Spleen (tissue), 13 donors: ENCODE measurements at regions of chr11 and their contacts with region 1.

Region 1: DNA sequence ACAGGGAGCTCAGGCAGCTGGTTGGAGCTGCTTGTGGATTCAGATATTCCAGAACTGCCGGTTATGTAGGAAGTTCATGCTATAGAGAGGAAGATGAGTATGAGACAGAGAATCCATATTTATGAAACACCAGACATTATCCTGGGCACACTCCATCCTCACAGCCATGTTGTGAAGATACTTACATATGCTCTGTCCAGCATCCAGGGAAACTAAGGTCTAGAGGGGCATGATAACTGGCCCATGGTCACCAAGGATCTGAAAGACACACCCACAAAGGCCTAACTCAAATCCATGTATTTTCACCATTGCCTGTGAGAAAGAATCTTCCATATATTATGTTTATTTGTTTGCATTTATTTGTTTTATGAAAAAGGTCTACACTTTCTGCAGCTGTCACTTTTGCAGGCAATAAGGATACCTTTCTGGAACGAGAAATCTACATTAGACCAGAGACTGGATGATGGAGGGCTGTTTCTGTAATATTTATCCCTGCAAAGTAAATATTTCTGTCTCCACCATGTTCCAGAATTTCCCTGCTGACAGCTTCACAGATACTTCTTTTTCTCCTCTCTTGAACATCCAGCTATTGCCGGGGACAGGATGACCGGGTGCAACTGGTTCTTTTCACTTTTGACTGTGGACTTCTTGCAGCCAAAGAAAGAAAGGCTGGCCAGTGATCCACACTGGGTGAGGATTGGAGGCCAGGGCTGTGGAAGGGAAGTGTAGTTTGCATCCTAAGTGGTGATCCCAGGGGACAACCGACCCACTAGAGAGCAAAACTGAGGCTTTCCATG is 145.9 kb upstream of the NAV2 start:
- DNase-seq: no peak
- H3K4me3 ChIP-seq: no peak overlapping the region
- H3K27ac ChIP-seq: no peak overlapping the region
- H3K4me1 ChIP-seq: peaks cover 0 to 7% (median 5%) of the 10 kb centered on the region in 6 donors
- H3K27me3 ChIP-seq: peaks cover 0 to 15% (median 0%) of the 10 kb centered on the region in 7 donors
- CTCF ChIP-seq: no peak
- POLR2A ChIP-seq: no peak

Region 2: GRCh38 chr11:19519912-19520641 is 46.7 kb before region 1 on chr11:
- intact Hi-C with region 1: no loop called
- DNase-seq: no peak
- H3K4me3 ChIP-seq: no peak overlapping the region
- H3K27ac ChIP-seq: no peak overlapping the region
- H3K4me1 ChIP-seq: no peaks in the 10 kb centered on the region
- H3K27me3 ChIP-seq: peaks cover 0 to 6% (median 0%) of the 10 kb centered on the region in 7 donors
- CTCF ChIP-seq: no peak
- POLR2A ChIP-seq: no peak

Region 3: DNA sequence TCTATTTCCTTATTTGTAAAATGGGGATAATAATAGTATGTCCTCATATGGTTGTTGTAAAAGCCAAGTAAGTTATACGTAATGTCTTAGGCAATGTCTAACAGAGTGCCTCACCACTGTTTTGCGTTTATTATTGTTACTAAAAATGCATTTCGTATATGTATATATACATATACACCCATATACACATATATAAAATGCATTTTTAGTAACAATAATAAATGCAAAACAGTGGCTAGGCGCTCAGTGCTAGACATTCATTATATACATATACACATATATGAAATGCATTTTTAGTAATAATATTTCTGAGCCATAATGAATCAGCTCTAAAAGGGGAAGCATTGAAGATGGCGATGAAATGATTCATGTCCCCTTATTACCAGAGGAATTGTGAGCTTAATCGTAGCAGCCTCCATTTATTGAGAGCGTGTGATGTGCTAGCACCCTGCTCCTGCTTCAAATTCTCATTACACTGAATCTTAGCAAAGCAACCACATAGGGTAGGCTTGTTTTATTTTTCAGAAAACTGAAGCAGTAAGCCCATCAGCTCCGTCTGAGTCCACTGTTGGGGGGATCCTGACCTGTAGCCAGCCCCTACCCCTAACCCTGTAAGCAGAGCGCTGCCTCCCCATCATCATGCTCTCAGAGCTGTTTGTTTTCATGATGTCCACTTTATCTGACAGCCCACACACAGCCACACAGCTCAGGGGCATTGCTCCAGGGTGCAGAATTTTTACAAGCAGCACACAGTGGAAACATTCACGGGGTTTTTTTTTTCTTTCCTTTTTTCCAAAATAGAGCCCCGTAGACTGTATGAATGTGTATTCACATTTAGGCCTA is 48.8 kb after region 1 on chr11:
- intact Hi-C with region 1: no loop called
- DNase-seq: no peak
- H3K4me3 ChIP-seq: no peak overlapping the region
- H3K27ac ChIP-seq: no peak overlapping the region
- H3K4me1 ChIP-seq: no peaks in the 10 kb centered on the region
- H3K27me3 ChIP-seq: no peaks in the 10 kb centered on the region
- CTCF ChIP-seq: no peak
- POLR2A ChIP-seq: no peak

Region 4: GRCh38 chr11:19739872-19740271 is 173.1 kb after region 1 on chr11:
- intact Hi-C with region 1: loop called (anchors 2 kb)
- DNase-seq: no peak
- H3K4me3 ChIP-seq: no peak overlapping the region
- H3K27ac ChIP-seq: no peak overlapping the region
- H3K4me1 ChIP-seq: peaks cover 0 to 11% (median 2%) of the 10 kb centered on the region in 6 donors
- H3K27me3 ChIP-seq: no peaks in the 10 kb centered on the region
- CTCF ChIP-seq: peak in 1 of 11 experiments; percentile 12
- POLR2A ChIP-seq: no peak